GM12878 (cell line): ENCODE measurements at regions of chr2 and their contacts with region 1.

Region 1: GRCh38 chr2:74587664-74588277 is 33.3 kb downstream of the DOK1 start:
- DNase-seq: no peak
- ATAC-seq: peak; percentile 86
- H3K4me3 ChIP-seq: no peak overlapping the region
- H3K27ac ChIP-seq: no peak overlapping the region
- H3K4me1 ChIP-seq: peaks cover 29% of the 10 kb centered on the region
- H3K27me3 ChIP-seq: no peaks in the 10 kb centered on the region
- CTCF ChIP-seq: peak; percentile 68 to 90 (median 86); a peak in 5 of 6 replicates
- EP300 ChIP-seq: no peak
- POLR2A ChIP-seq: no peak
- RAD21 ChIP-seq: peak; percentile 96

Region 2: GRCh38 chr2:74250189-74250631 is 337.6 kb before region 1 on chr2:
- CTCF ChIA-PET with region 1: interaction called, 24 read pairs
- POLR2A ChIA-PET with region 1: no interaction called
- RAD21 ChIA-PET with region 1: interaction called, 8 read pairs
- SMC1A ChIA-PET with region 1: interaction called, 13 read pairs
- in situ Hi-C with region 1: loop called (anchors 10 kb)
- intact Hi-C with region 1: no loop called
- DNase-seq: peak; percentile 17
- ATAC-seq: peak; percentile 95
- H3K4me3 ChIP-seq: no peak overlapping the region
- H3K27ac ChIP-seq: no peak overlapping the region
- H3K4me1 ChIP-seq: no peaks in the 10 kb centered on the region
- H3K27me3 ChIP-seq: no peaks in the 10 kb centered on the region
- CTCF ChIP-seq: peak; percentile 78 to 87 (median 84)
- EP300 ChIP-seq: no peak
- POLR2A ChIP-seq: no peak
- RAD21 ChIP-seq: peak; percentile 82

Region 3: DNA sequence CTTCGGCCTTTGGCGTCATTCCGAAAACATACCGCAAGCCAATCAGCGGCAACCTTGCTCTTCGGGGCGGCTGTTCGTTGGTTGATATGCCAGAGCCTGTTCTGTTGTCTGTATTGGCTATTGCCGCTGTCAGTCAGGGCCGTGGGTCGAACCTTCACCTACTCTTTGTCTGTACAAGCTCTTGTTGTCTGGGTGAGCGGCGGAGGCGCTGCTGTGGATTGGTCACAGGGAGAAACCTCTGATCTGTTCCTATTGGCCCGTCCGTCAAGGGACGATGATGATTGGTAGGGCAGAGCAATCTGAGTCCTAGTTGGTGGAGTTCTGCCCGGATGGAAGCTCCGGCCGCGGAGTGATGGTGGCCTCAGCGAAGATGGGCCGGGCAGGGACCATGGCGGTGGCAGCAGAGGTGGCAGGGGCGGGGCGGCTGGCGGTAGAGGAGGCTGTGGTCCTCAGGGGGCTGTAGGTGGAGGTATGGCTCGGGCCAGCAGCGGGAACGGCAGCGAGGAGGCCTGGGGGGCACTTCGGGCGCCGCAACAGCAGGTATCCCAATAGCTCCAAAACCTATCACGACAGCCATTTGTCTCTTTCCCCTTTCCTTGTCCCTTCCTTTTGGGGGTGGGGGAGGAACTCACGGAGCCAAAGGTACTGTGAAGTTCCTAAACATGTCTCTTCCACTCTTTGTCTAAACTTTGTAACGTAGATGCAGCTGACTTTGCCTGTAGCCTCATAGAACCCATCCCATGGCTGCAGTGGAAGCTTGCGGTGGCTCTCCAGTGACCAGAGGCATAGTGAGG is 129.4 kb before region 1 on chr2 and contains the start of gene WBP1:
- CTCF ChIA-PET with region 1: interaction called, 26 read pairs
- POLR2A ChIA-PET with region 1: interaction called, 10 read pairs
- RAD21 ChIA-PET with region 1: interaction called, 19 read pairs
- SMC1A ChIA-PET with region 1: interaction called, 19 read pairs
- in situ Hi-C with region 1: no loop called
- intact Hi-C with region 1: no loop called
- DNase-seq: peak; percentile 100
- ATAC-seq: peak; percentile 90
- H3K4me3 ChIP-seq: peak within 1 kb of the TSS; percentile 99
- H3K27ac ChIP-seq: peak within 1 kb of the TSS; percentile 96
- H3K4me1 ChIP-seq: peaks cover 19% of the 10 kb centered on the region
- H3K27me3 ChIP-seq: no peaks in the 10 kb centered on the region
- CTCF ChIP-seq: no peak
- EP300 ChIP-seq: no peak
- POLR2A ChIP-seq: peak; percentile 68
- RAD21 ChIP-seq: no peak
- polyA plus RNA-seq, gene WBP1: 4.2 to 11.5 TPM

Region 4: DNA sequence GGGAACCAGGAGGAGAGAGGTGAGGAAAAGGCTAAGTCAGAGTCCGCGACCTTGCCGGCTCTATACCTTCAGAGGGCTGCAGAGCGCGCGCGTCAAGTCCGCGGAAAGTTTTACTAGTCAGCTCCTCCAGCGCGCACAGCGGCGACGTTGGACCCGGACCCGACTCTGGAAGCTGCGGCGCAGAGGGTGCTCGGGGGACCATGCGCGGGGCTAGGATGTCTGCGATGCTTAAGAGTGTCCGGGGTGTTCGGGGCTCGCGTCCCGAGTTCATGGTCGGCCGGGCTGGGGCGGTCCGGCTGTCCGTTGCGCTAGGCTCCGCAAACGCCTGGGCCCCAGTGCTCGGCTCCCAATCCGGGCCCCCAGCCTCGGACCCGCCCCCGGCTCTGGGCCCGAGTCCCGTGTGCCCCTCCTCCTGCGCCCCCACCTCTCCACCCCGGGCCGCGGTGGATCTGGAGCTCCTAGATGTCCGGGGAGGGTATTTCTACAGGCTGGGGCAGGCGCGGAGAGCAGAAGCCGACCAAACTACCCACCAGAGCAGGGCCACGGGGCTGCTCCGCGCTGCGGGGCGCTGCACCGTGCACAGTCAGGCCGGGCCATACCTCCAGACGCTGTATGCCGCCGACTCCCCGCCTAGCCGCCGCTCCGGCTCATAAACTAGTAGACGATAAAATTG is 88.4 kb before region 1 on chr2 and contains the start of gene LBX2:
- CTCF ChIA-PET with region 1: interaction called, 280 read pairs
- POLR2A ChIA-PET with region 1: interaction called, 6 read pairs
- RAD21 ChIA-PET with region 1: interaction called, 21 read pairs
- SMC1A ChIA-PET with region 1: interaction called, 71 read pairs
- in situ Hi-C with region 1: no loop called
- intact Hi-C with region 1: no loop called
- DNase-seq: no peak
- ATAC-seq: no peak
- H3K4me3 ChIP-seq: peak within 1 kb of the TSS; percentile 57; the same call in 1 of the 2 replicates
- H3K27ac ChIP-seq: no peak within 1 kb of the TSS
- H3K4me1 ChIP-seq: peaks cover 15% of the 10 kb centered on the region
- H3K27me3 ChIP-seq: peaks cover 15 to 25% of the 10 kb centered on the region in 2 experiments; a peak in 3 of 4 replicates
- CTCF ChIP-seq: no peak
- EP300 ChIP-seq: no peak
- POLR2A ChIP-seq: 0 out of 2 replicates have a peak, but pooled peaks have one; percentile 8
- RAD21 ChIP-seq: no peak
- polyA plus RNA-seq, gene LBX2: 0.08 to 0.09 TPM

Region 5: GRCh38 chr2:74538881-74539339 is 48.9 kb before region 1 on chr2:
- CTCF ChIA-PET with region 1: interaction called, 226 read pairs
- POLR2A ChIA-PET with region 1: interaction called, 441 read pairs
- RAD21 ChIA-PET with region 1: interaction called, 30 read pairs
- SMC1A ChIA-PET with region 1: interaction called, 208 read pairs
- in situ Hi-C with region 1: no loop called
- intact Hi-C with region 1: no loop called
- DNase-seq: peak; percentile 40
- ATAC-seq: peak; percentile 85
- H3K4me3 ChIP-seq: peak overlapping the region; percentile 12; the same call in 1 of the 2 replicates
- H3K27ac ChIP-seq: peak overlapping the region; percentile 65
- H3K4me1 ChIP-seq: peaks cover 15% of the 10 kb centered on the region
- H3K27me3 ChIP-seq: no peaks in the 10 kb centered on the region
- CTCF ChIP-seq: no peak
- EP300 ChIP-seq: peak in 1 of 2 experiments; percentile 35; a peak in 1 of 4 replicates
- POLR2A ChIP-seq: 0 out of 2 replicates have a peak, but pooled peaks have one; percentile 23
- RAD21 ChIP-seq: no peak

Region 6: DNA sequence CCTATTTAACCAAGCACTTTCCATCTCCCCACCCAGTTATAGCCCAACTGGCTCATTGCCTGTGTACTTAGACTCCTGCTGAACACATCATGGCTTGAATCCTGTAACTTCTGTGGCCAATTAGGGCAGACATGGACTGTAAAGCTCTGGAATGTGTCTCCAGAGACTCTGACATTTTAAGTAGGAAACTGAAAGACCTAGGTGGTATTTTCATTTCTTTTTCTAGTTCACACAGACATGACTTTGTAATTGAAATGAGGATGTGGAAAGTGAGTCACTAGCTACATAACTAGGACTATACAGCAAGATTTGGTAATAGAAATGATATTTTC is 21.1 kb before region 1 on chr2:
- CTCF ChIA-PET with region 1: interaction called, 281 read pairs
- POLR2A ChIA-PET with region 1: interaction called, 87 read pairs
- RAD21 ChIA-PET with region 1: interaction called, 152 read pairs
- SMC1A ChIA-PET with region 1: interaction called, 371 read pairs
- in situ Hi-C with region 1: no loop called
- intact Hi-C with region 1: no loop called
- DNase-seq: no peak
- ATAC-seq: peak; percentile 59
- H3K4me3 ChIP-seq: no peak overlapping the region; the same call in 1 of the 2 replicates
- H3K27ac ChIP-seq: peak overlapping the region; percentile 77
- H3K4me1 ChIP-seq: peaks cover 57% of the 10 kb centered on the region
- H3K27me3 ChIP-seq: no peaks in the 10 kb centered on the region
- CTCF ChIP-seq: no peak
- EP300 ChIP-seq: peak; percentile 38 to 63; a peak in 3 of 4 replicates
- POLR2A ChIP-seq: no peak
- RAD21 ChIP-seq: no peak

Region 7: DNA sequence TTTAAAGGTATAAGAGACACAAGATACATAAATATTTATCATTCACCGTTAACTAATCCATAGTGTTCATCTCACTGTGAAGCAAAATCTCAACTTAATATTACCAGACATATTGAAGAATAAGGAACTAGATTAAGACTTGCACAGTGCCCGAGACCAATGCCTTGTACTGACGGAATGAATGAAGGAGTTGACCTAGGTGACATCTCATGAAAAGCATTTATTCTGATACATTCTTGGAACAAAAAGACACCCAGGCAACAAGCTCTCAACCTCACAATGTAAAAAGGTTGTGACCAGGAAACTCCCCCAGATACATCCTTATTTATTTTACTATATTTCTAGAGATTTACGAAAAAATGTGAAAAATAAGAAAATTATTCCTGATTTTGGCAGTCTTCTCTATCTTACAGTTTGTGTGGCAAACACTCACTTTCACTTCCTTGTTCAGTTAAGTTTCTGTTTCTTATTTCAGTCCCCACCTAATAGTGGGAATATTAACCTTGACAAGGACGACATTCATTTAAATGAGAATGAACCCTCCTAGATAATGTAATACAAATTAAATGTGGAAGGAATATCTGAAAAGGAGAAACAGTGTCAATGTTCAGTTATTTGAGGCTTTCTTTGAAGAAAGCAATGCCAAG is 32.0 kb after region 1 on chr2:
- CTCF ChIA-PET with region 1: interaction called, 56 read pairs
- POLR2A ChIA-PET with region 1: interaction called, 3 read pairs
- RAD21 ChIA-PET with region 1: interaction called, 7 read pairs
- SMC1A ChIA-PET with region 1: interaction called, 48 read pairs
- in situ Hi-C with region 1: no loop called
- intact Hi-C with region 1: no loop called
- DNase-seq: peak; percentile 26
- ATAC-seq: peak; percentile 81
- H3K4me3 ChIP-seq: no peak overlapping the region
- H3K27ac ChIP-seq: no peak overlapping the region; the same call in 1 of the 2 replicates
- H3K4me1 ChIP-seq: peaks cover 4% of the 10 kb centered on the region
- H3K27me3 ChIP-seq: no peaks in the 10 kb centered on the region
- CTCF ChIP-seq: no peak
- EP300 ChIP-seq: 0 out of 4 replicates have a peak, but pooled peaks of 1 of the 2 experiments have one; percentile 25
- POLR2A ChIP-seq: no peak
- RAD21 ChIP-seq: no peak

Region 8: GRCh38 chr2:74764429-74765272 is 176.9 kb after region 1 on chr2:
- CTCF ChIA-PET with region 1: no interaction called
- POLR2A ChIA-PET with region 1: no interaction called
- RAD21 ChIA-PET with region 1: no interaction called
- SMC1A ChIA-PET with region 1: no interaction called
- in situ Hi-C with region 1: no loop called
- intact Hi-C with region 1: no loop called
- DNase-seq: no peak
- ATAC-seq: peak; percentile 51
- H3K4me3 ChIP-seq: no peak overlapping the region
- H3K27ac ChIP-seq: no peak overlapping the region
- H3K4me1 ChIP-seq: peaks cover 12% of the 10 kb centered on the region; the same call in 1 of the 2 replicates
- H3K27me3 ChIP-seq: no peaks in the 10 kb centered on the region
- CTCF ChIP-seq: no peak
- EP300 ChIP-seq: no peak
- POLR2A ChIP-seq: no peak
- RAD21 ChIP-seq: no peak

Region 9: GRCh38 chr2:74893332-74893731 is 305.6 kb after region 1 on chr2:
- CTCF ChIA-PET with region 1: no interaction called
- POLR2A ChIA-PET with region 1: no interaction called
- RAD21 ChIA-PET with region 1: no interaction called
- SMC1A ChIA-PET with region 1: no interaction called
- in situ Hi-C with region 1: no loop called
- intact Hi-C with region 1: no loop called
- DNase-seq: no peak
- ATAC-seq: no peak
- H3K4me3 ChIP-seq: no peak overlapping the region
- H3K27ac ChIP-seq: no peak overlapping the region
- H3K4me1 ChIP-seq: no peaks in the 10 kb centered on the region
- H3K27me3 ChIP-seq: no peaks in the 10 kb centered on the region
- CTCF ChIP-seq: no peak
- EP300 ChIP-seq: no peak
- POLR2A ChIP-seq: no peak
- RAD21 ChIP-seq: no peak